Panc1 (cell line): ENCODE measurements at regions of chr12 and their contacts with region 1.

Region 1: DNA sequence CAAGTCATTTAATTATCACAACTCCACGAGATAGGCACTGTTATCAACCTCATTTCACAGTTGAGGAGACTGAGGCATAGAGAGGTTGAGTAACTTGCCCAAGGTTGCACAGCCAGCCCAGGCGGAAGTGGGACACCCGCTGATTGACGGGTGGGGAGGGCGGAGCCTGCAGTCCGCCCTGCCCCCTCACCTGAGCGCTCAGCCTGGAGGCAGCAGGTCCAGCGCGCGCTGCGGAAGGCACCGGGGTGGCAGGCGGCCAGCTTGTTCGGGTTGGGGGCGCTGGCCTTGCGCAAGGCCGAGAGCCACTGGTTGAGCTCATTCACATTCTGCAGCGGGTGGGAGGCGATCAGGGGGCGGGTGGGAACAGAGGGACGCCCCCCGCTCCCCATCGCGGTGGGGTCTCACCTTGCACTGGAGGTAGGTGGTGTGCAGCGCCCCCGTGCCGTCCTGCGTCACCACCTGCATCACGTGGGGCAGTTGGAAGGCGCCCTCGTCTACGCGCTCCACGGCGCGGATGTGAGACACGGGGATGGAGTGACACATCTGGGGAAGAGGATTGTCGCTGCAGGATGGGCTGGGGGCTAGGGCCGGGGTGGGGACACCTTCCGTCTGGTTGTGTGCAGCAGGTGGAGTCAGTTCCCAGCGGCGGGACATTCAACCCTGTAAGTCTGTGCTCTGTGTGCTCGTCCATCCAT is 31.7 kb downstream of the RASAL1 start:
- DNase-seq: no peak
- ATAC-seq: no peak
- H3K4me3 ChIP-seq: no peak overlapping the region
- H3K27ac ChIP-seq: no peak overlapping the region
- H3K4me1 ChIP-seq: no peaks in the 10 kb centered on the region
- H3K27me3 ChIP-seq: no peaks in the 10 kb centered on the region
- CTCF ChIP-seq: no peak

Region 2: GRCh38 chr12:112868459-112869041 is 235.4 kb before region 1 on chr12:
- CTCF ChIA-PET with region 1: no interaction called
- POLR2A ChIA-PET with region 1: no interaction called
- in situ Hi-C with region 1: no loop called
- intact Hi-C with region 1: no loop called
- DNase-seq: no peak
- ATAC-seq: no peak
- H3K4me3 ChIP-seq: no peak overlapping the region
- H3K27ac ChIP-seq: no peak overlapping the region
- H3K4me1 ChIP-seq: no peaks in the 10 kb centered on the region
- H3K27me3 ChIP-seq: peaks cover 23% of the 10 kb centered on the region
- CTCF ChIP-seq: no peak

Region 3: DNA sequence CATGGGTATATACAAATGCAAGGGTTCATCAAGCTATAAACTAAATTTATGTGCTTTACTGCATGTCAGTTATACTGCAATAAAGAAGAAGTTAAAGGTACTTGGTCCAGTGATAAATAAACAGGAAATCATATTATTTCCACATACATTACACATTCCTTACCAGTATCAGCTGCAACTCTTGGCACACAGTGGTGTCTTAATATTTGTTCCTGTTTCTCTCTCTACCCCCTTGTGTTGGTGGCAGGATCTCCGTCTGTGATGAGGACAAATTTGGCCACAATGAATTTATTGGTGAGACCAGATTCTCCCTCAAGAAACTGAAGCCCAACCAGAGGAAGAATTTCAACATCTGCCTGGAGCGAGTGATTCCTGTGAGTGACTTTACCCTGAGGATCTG is 216.4 kb before region 1 on chr12:
- CTCF ChIA-PET with region 1: no interaction called
- POLR2A ChIA-PET with region 1: no interaction called
- in situ Hi-C with region 1: no loop called
- intact Hi-C with region 1: no loop called
- DNase-seq: no peak
- ATAC-seq: no peak
- H3K4me3 ChIP-seq: no peak overlapping the region
- H3K27ac ChIP-seq: no peak overlapping the region
- H3K4me1 ChIP-seq: no peaks in the 10 kb centered on the region
- H3K27me3 ChIP-seq: peaks cover 6% of the 10 kb centered on the region; the same call in 1 of the 2 replicates
- CTCF ChIP-seq: no peak

Region 4: DNA sequence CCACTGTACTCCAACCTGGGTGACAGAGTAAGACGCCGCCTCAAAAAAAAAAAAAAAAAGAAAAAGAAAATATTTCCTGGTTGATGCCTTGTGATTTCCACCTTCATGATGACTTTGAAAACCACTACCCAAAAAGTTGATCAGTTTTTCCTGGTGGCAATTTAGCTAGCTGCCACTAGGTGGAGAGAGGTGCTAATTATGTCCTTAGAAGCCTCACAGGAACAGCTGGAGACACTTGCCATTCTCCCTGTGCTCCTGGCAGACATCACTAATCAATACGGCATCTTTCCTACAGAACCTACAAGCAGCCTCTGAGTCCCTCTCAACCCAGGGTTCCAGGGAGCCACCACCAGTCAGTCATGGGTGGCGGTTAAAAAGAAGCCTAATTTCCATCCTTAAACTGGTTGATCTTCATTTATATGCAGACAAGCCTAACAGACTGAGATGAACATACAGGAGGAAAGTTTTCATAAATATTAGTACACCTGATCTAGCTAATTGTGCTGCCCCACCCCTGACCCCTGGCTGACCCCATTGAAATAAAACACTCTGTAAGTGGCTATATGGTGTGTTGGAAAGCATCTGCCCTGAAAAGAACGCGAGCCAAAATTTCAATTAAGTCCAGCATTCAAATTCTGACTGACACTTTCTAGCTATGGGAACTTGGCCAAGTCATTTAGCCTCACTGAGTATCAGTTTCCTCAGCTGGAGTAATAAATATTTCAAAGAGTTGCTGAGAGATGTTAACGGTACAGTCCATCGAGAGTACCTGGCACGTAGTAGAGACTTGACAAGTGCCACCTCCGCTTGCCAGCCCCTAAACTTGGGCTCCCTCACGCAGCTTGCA is 203.4 kb before region 1 on chr12:
- CTCF ChIA-PET with region 1: interaction called, 10 read pairs
- POLR2A ChIA-PET with region 1: no interaction called
- in situ Hi-C with region 1: no loop called
- intact Hi-C with region 1: no loop called
- DNase-seq: peak; percentile 30
- ATAC-seq: peak; percentile 79
- H3K4me3 ChIP-seq: no peak overlapping the region
- H3K27ac ChIP-seq: no peak overlapping the region
- H3K4me1 ChIP-seq: no peaks in the 10 kb centered on the region
- H3K27me3 ChIP-seq: no peaks in the 10 kb centered on the region
- CTCF ChIP-seq: peak; percentile 88